Mammary epithelial cell (primary cell): ENCODE measurements at regions of chr3 and their contacts with region 1.

Region 1: GRCh38 chr3:136390574-136390973 is 140.4 kb downstream of the PCCB start:
- DNase-seq: no peak
- H3K4me3 ChIP-seq: no peak overlapping the region
- H3K27ac ChIP-seq: no peak overlapping the region
- H3K4me1 ChIP-seq: no peaks in the 10 kb centered on the region
- H3K27me3 ChIP-seq: no peaks in the 10 kb centered on the region
- CTCF ChIP-seq: no peak

Region 2: DNA sequence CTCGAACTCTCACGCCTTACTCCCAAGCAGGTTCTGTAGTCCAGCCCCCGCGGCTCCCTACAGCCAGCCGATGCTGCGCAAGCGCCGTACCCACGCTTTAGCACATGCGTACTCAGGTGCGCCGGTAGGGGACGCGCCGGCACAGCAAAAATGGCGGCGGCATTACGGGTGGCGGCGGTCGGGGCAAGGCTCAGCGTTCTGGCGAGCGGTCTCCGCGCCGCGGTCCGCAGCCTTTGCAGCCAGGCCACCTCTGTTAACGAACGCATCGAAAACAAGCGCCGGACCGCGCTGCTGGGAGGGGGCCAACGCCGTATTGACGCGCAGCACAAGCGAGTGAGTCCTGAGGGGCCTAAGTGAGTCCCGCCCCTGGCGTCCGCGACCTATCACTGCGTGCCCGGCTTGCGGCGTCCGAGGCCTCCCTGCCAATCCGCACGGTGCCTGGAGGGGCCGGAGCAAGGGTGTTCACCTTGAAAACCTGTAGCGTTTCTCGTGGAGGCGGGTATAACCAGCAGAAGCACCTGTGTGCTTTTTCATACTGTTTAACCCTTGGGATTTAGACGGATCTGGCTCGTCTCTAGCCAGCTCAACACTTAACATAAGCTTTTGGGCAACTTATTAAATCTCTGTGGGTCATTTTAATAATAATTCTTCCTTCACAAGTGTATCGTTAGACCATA is 140.2 kb before region 1 on chr3 and contains the start of gene PCCB:
- CTCF ChIA-PET with region 1: no interaction called
- dilution Hi-C with region 1: no loop called
- in situ Hi-C with region 1: no loop called
- intact Hi-C with region 1: loop called (anchors 5 kb)
- DNase-seq: peak; percentile 95
- H3K4me3 ChIP-seq: peak within 1 kb of the TSS; percentile 63 to 74 (median 71)
- H3K27ac ChIP-seq: peak within 1 kb of the TSS; percentile 39
- H3K4me1 ChIP-seq: peaks cover 13% of the 10 kb centered on the region
- H3K27me3 ChIP-seq: no peaks in the 10 kb centered on the region
- CTCF ChIP-seq: peak; percentile 40 to 89
- total RNA-seq, gene PCCB: 29.7 to 35.5 TPM